Activated T-helper 2 cell treated with anti-CD3 and anti-CD28 coated beads, Interferon-gamma antibody, Interleukin-2, Interleukin-4, amounts not matched to agents 10 μg/mL and 5 μg/mL and 100 μg/mL, durations not matched to agents 14 hours and 24 hours and 36 hours (primary cell): ENCODE measurements at regions of chr15 and their contacts with region 1.

Region 1: DNA sequence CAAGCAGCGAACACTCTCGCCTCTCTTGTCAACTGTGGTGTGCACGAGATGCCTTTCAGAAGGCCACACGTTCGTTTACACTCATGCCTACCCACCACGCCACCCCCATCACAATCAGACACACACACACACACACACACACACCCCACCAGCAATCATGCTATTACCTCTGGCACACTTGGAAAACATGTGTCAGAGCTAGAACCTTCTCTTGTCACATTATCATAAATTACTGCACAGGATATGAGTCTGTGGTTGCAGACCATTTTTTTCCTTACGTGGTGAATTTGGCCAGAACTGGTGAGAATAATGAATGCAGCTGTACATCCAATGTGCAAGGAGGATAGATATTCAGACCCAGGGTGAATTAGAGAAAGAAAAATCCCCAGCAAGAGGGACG is 52.4 kb downstream of the TRIM69 start:
- DNase-seq: peak; percentile 22
- H3K4me3 Mint-ChIP-seq: no peak overlapping the region
- H3K27ac Mint-ChIP-seq: peak overlapping the region; percentile 70
- H3K4me1 Mint-ChIP-seq: peaks cover 42% of the 10 kb centered on the region
- H3K27me3 Mint-ChIP-seq: no peaks in the 10 kb centered on the region

Region 2: GRCh38 chr15:44545913-44546802 is 242.6 kb before region 1 on chr15:
- intact Hi-C with region 1: no loop called
- DNase-seq: peak; percentile 39
- H3K4me3 Mint-ChIP-seq: peak overlapping the region; percentile 53
- H3K27ac Mint-ChIP-seq: peak overlapping the region; percentile 87
- H3K4me1 Mint-ChIP-seq: peaks cover 47% of the 10 kb centered on the region
- H3K27me3 Mint-ChIP-seq: no peaks in the 10 kb centered on the region

Region 3: DNA sequence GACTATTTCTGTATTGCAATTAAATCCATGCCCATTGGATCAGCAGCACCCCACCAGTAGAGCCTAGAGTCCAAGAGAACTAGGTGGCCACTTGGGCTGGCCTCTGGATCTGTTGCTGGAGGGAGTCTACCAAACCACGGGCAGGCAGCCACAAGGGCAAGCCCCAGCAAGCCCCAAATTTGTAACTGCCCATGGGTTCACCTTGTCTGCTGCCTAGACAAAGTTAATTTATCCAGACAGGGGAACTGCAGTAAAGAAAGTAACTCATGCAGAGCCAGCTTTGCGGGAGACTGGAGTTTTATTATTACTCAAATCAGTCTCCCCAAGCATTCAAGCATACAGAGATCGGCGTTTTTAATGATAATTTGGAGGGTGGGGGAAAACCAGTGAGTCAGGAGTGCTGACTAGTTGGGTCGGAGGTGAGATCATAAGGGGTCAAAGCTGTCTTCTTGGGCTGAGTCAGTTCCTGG is 93.8 kb after region 1 on chr15:
- intact Hi-C with region 1: loop called (anchors 2 kb)
- DNase-seq: peak; percentile 26
- H3K4me3 Mint-ChIP-seq: peak overlapping the region; percentile 56
- H3K27ac Mint-ChIP-seq: peak overlapping the region; percentile 88
- H3K4me1 Mint-ChIP-seq: peaks cover 36% of the 10 kb centered on the region
- H3K27me3 Mint-ChIP-seq: no peaks in the 10 kb centered on the region

Region 4: GRCh38 chr15:45230246-45230965 is 441.7 kb after region 1 on chr15:
- intact Hi-C with region 1: no loop called
- DNase-seq: no peak
- H3K4me3 Mint-ChIP-seq: no peak overlapping the region
- H3K27ac Mint-ChIP-seq: no peak overlapping the region
- H3K4me1 Mint-ChIP-seq: no peaks in the 10 kb centered on the region
- H3K27me3 Mint-ChIP-seq: peaks cover 7% of the 10 kb centered on the region